ENCODE measurements at regions of chr11 and their contacts with region 1.

Region 1: GRCh38 chr11:36455658-36456111 is 54.4 kb downstream of the TRAF6 start:
- DNase-seq: peak; percentile 61 to 95
- H3K4me3 ChIP-seq: peak overlapping the region in 1 of 2 donors; percentile 19
- H3K27ac ChIP-seq: peak overlapping the region; percentile 93 to 97
- H3K4me1 ChIP-seq: peaks cover 19 to 45% of the 10 kb centered on the region in 2 donors
- H3K27me3 ChIP-seq: no peaks in the 10 kb centered on the region
- CTCF ChIP-seq: no peak

Region 2: GRCh38 chr11:36376888-36377758 is 78.6 kb before region 1 on chr11:
- intact Hi-C with region 1: loop called (anchors 2 kb)
- DNase-seq: peak in 1 of 2 donors; percentile 71
- H3K4me3 ChIP-seq: peak overlapping the region; percentile 65 to 78
- H3K27ac ChIP-seq: peak overlapping the region in 1 of 2 donors; percentile 62
- H3K4me1 ChIP-seq: peaks cover 0 to 4% of the 10 kb centered on the region in 2 donors
- H3K27me3 ChIP-seq: peaks cover 7% of the 10 kb centered on the region
- CTCF ChIP-seq: peak; percentile 36 to 52 (median 45)

Region 3: GRCh38 chr11:36500315-36500721 is 44.6 kb after region 1 on chr11:
- intact Hi-C with region 1: loop called (anchors 5 kb)
- DNase-seq: peak; percentile 22 to 75
- H3K4me3 ChIP-seq: no peak overlapping the region
- H3K27ac ChIP-seq: peak overlapping the region; percentile 71 to 81
- H3K4me1 ChIP-seq: peaks cover 6 to 25% of the 10 kb centered on the region in 2 donors
- H3K27me3 ChIP-seq: no peaks in the 10 kb centered on the region
- CTCF ChIP-seq: no peak